Activated CD4-positive, alpha-beta T cell treated with anti-CD3 and anti-CD28 coated beads, Interleukin-2, amount 10 ng/mL, durations not matched to agents 24 days and 14 days (primary cell): ENCODE measurements at regions of chr12 and their contacts with region 1.

Region 1: DNA sequence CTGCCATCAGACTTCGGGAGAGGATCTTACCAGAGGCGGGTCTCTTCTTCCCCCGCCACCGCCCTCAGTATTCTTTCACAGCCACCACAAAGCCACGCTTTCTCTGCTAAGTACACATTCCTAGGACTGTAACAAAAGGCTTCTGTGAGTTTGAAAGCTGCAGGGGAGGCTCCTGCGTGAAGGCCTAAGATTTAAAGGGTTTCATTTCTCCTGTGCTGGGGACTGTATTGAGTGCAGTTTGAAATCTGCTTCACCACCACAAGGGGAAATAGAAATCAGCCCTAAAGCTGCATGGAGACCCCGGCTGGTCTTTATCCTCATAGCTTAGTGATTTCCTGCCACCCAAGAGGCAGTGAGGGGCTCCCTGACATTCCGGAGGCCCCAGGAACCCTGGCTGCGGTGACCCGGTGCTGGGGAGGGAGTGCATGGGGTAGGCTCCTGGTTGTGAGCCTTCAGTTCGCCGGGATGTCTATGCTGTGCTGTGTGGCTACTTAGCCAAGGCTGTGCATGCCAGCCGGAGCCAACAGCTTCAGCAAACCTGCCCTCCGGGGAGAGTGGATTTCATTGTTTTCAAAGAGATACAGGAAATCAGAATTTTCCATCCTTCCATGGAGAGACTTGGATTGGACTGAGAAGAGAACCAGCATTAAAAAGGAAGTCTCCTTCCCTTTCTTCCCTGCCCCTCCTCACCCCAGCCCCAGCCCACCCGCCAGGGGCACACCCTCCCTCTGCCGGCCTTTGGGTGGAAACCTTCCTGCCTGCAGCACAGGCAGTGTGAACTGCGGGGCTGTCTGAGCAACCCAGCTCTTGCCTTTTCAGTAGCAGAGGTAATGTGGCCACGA is 163.3 kb downstream of the ETV6 start:
- DNase-seq: peak; percentile 71
- H3K4me3 Mint-ChIP-seq: peak overlapping the region; percentile 74
- H3K27ac Mint-ChIP-seq: peak overlapping the region; percentile 88
- H3K4me1 Mint-ChIP-seq: peaks cover 71% of the 10 kb centered on the region
- H3K27me3 Mint-ChIP-seq: no peaks in the 10 kb centered on the region

Region 2: GRCh38 chr12:11771356-11771755 is 41.5 kb before region 1 on chr12:
- intact Hi-C with region 1: loop called (anchors 2 kb)
- DNase-seq: peak; percentile 65
- H3K4me3 Mint-ChIP-seq: peak overlapping the region; percentile 26
- H3K27ac Mint-ChIP-seq: peak overlapping the region; percentile 97
- H3K4me1 Mint-ChIP-seq: peaks cover 78% of the 10 kb centered on the region
- H3K27me3 Mint-ChIP-seq: no peaks in the 10 kb centered on the region

Region 3: GRCh38 chr12:12439636-12440035 is 626.8 kb after region 1 on chr12:
- intact Hi-C with region 1: no loop called
- DNase-seq: peak; percentile 82
- H3K4me3 Mint-ChIP-seq: peak overlapping the region; percentile 11
- H3K27ac Mint-ChIP-seq: peak overlapping the region; percentile 91
- H3K4me1 Mint-ChIP-seq: peaks cover 53% of the 10 kb centered on the region
- H3K27me3 Mint-ChIP-seq: no peaks in the 10 kb centered on the region